Posterior vena cava (tissue), 2 donors: ENCODE measurements at regions of chr17 and their contacts with region 1.

Region 1: DNA sequence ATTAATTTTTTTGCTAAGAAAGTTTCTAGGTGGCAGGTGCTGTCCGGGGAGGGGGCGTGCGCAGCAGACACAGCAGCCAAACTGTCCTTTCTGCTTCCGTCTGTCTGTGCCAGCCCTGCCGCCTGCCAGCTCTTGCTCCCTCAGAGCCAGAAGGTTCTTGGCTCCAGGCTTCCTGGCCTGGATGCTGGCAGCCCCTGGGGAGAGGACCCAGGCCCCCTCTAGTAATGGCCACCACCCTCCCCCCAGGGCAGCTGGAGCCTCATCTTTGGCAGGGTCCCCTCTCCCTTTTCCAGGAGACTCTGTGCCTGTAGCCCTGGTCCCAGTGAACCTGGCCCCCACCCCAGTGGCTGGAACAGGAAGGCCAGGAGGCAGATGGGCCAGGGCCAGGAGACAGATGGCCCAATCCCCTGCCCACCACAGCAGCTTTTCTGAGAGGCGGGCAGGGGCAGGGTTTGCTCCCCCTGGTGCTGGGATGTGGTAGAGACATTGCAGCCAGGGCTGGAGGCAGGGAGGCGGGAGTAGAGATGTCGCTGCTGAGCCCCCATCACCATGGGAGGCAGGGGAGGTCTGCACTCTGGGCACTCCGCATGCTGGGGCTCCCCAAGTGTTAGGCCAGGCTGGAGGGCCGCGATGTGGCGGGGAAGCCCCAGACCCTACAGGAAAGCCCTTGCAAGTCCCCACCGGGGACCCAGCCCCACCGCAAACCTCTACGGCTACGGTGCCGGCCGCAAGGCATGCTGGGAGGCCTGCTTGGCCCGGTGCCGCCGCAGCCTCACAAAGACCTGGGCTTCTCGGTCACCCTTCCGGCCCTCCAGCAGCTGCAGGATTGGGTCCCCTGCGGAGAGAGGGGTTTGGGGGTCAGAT is 16.7 kb downstream of the UNC13D start:
- DNase-seq: peak; percentile 89

Region 2: DNA sequence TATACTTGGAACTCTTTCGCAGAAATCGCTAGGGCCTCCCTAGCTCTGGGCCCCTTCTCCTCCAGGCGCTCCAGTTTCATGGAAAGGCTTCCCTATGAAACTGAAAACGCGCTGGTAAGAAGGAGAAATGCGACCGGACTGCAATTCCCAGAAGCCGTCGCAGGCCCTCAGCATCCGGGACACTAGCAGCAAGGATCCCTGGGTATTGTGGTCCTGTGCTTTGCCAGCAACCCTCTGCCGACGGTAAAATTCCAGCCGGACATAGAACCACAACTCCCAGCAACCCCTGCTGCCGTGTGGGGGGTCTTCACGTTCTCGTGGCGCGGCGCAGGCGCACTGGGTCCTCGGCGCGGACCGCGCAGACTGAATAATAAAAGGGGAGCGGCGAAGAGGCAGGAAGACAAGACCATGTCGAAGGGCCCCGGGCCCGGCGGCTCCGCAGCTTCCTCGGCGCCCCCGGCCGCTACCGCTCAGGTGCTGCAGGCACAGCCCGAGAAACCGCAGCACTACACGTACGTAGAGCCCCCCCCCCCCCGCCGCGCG is 42.9 kb before region 1 on chr17 and contains the start of gene UNK:
- intact Hi-C with region 1: loop called in 1 of 2 experiments (anchors 5 kb)
- DNase-seq: peak; percentile 99
- total RNA-seq, gene UNK: 23.3 to 32.9 TPM